ENCODE measurements at regions of chr10 and their contacts with region 1.

Region 1: DNA sequence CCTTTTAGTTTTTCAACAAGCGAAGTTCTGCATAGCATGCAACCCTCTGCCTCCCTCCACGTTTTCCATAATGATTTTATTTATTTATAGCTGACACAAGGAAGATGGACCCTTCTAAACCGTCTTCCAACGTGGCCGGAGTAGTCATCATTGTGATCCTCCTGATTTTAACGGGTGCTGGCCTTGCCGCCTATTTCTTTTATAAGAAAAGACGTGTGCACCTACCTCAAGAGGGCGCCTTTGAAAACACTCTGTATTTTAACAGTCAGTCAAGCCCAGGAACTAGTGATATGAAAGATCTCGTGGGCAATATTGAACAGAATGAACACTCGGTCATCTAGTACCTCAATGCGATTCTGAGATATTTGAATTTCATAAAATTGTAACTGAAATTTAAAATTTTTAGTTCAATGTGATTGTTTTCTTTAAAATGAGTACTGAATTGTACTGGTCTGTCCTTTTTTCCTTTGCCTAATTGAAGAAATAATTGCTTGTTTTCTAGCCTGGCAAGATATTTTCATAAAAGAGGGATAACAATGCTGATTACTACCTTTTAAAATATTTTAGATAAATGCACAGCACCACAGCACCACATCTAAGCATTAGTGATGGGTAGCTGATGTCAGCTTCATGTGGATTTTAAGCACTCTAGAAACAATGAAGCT is 41.5 kb upstream of the SLC39A12 start:
- DNase-seq: peak in 1 of 2 donors; percentile 67
- H3K4me3 ChIP-seq: no peak overlapping the region
- H3K27ac ChIP-seq: no peak overlapping the region
- H3K4me1 ChIP-seq: no peaks in the 10 kb centered on the region
- H3K27me3 ChIP-seq: no peaks in the 10 kb centered on the region
- CTCF ChIP-seq: peak; percentile 10 to 66 (median 61)

Region 2: DNA sequence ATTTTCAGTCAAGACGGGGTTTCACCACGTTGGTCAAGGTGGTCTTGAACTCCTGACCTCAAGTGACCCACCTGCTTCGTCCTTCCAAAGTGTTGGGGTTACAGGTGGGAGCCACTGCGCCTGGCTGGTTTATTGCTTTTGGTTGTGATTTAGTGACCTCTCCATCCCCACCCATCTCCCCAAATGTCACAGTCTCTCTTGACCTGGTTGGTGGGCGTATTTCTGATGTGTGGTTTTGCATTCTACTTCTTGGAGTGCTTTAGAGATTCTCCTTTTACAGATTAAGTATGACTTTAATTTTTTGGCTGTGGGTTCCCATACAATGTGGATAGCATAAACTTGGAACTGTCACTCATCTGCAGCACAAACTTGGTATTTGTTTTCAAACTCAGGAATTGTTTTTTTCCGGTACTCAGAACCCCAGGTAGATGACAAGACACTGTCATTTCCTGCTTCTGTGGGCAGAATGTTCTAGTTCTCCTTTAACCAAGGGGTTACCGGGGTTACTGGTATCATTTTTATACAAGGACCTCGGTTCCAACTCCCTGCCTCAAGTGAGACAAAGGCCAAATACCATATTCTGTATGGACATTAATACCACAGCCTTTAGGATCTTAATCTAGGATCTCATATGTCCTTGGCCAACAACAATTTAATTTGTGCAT is 50.6 kb before region 1 on chr10:
- intact Hi-C with region 1: no loop called
- DNase-seq: no peak
- H3K4me3 ChIP-seq: no peak overlapping the region
- H3K27ac ChIP-seq: no peak overlapping the region
- H3K4me1 ChIP-seq: no peaks in the 10 kb centered on the region
- H3K27me3 ChIP-seq: no peaks in the 10 kb centered on the region
- CTCF ChIP-seq: no peak

Region 3: GRCh38 chr10:18044976-18045720 is 134.9 kb after region 1 on chr10:
- intact Hi-C with region 1: loop called (anchors 10 kb)
- DNase-seq: no peak
- H3K4me3 ChIP-seq: no peak overlapping the region
- H3K27ac ChIP-seq: no peak overlapping the region
- H3K4me1 ChIP-seq: peaks cover 0 to 11% of the 10 kb centered on the region in 2 donors
- H3K27me3 ChIP-seq: no peaks in the 10 kb centered on the region
- CTCF ChIP-seq: no peak

Region 4: DNA sequence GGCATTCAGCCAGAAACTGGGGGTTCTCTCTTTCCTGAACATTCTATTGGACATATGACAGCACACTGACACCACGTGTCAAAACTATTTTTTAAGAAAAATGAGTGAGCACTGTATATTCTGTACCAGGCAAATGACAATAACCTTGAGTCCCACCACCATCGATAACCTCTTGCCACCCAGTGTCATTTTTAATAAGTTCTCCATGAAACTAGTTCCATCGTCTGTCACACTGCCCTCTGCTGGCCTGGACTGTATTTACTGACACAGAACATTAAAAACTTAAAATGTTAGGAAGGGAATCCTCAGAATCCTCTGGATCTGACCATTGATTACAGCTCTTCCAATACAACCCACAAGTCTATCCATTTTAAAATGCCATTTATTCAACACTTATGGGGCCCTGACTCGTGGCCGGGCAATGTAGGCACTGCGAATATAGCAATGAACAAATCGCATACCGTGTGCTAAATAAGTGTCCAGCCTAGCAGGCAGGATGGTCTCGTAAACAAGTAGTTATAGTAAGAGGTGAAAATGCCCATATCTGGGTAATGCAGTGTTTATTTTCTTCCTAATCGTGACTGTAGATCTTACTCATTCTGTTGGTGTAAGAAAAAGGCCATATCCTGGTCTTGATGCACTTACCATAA is 194.1 kb after region 1 on chr10:
- intact Hi-C with region 1: loop called (anchors 1 kb)
- DNase-seq: peak in 1 of 2 donors; percentile 70
- H3K4me3 ChIP-seq: peak overlapping the region in 1 of 2 donors; percentile 53
- H3K27ac ChIP-seq: no peak overlapping the region
- H3K4me1 ChIP-seq: no peaks in the 10 kb centered on the region
- H3K27me3 ChIP-seq: no peaks in the 10 kb centered on the region
- CTCF ChIP-seq: peak; percentile 39 to 72 (median 52)

Region 5: GRCh38 chr10:18140149-18140956 is 230.1 kb after region 1 on chr10 and contains the start of gene CACNB2:
- intact Hi-C with region 1: loop called (anchors 5 kb)
- DNase-seq: peak in 1 of 2 donors; percentile 84
- H3K4me3 ChIP-seq: peak within 1 kb of the TSS; percentile 67 to 69
- H3K27ac ChIP-seq: peak within 1 kb of the TSS; percentile 80 to 82
- H3K4me1 ChIP-seq: peaks cover 0 to 10% of the 10 kb centered on the region in 2 donors
- H3K27me3 ChIP-seq: no peaks in the 10 kb centered on the region
- CTCF ChIP-seq: no peak
- total RNA-seq, gene CACNB2: 0.96 TPM

Region 6: DNA sequence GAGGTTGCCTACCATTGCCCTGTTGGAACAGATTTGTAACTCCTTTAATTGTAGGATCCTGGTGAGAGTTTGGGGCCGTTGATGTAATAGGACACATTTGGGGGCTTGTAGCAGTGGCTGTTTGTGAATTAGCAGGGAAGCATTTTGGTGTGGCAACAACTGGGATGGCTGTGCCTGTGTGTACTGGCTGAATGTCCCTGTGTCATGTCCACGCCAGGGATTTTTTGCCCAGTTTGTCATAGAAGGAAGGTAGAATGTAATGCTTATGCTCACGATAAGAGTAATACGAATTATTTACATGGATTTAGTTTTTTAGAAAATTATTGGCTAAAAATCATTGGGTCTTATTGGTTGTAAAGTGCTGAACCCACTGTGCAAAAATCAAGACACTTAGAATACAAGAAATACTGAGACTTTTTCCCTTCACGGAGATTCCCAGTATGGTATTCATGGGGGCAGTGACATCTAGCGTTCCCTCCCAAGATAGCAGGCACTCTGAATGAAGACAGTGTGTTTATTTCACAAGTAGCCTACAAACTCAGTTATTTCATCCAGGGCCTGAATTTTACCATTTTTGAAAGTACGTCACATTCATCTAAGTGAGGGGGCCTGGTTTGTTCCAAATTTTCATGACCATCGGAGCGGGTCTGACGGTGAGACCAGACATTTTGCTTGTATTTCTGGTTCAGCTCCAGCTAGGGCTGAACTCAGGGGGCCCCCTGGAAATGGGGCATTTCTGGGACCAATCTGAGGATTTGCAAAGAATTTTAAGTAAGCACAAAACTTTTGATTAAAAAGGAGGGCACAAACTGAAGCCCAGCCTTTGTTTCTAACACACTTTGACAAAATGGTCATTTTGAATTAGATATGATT is 304.7 kb after region 1 on chr10:
- intact Hi-C with region 1: loop called (anchors 1 kb)
- DNase-seq: peak in 1 of 2 donors; percentile 72
- H3K4me3 ChIP-seq: no peak overlapping the region
- H3K27ac ChIP-seq: no peak overlapping the region
- H3K4me1 ChIP-seq: no peaks in the 10 kb centered on the region
- H3K27me3 ChIP-seq: no peaks in the 10 kb centered on the region
- CTCF ChIP-seq: peak; percentile 52 to 84 (median 81)

Region 7: GRCh38 chr10:18238870-18239485 is 328.7 kb after region 1 on chr10:
- intact Hi-C with region 1: loop called (anchors 5 kb)
- DNase-seq: no peak
- H3K4me3 ChIP-seq: no peak overlapping the region
- H3K27ac ChIP-seq: no peak overlapping the region
- H3K4me1 ChIP-seq: peaks cover 0 to 21% of the 10 kb centered on the region in 2 donors
- H3K27me3 ChIP-seq: no peaks in the 10 kb centered on the region
- CTCF ChIP-seq: peak; percentile 19 to 69 (median 64)

Measured in ascending aorta (tissue), 2 donors.